GM12878 (cell line): ENCODE measurements at regions of chr22 and their contacts with region 1.

Region 1: GRCh38 chr22:46013460-46014416 is 36.8 kb upstream of the WNT7B start:
- DNase-seq: no peak
- ATAC-seq: peak; percentile 98
- H3K4me3 ChIP-seq: peak overlapping the region; percentile 84
- H3K27ac ChIP-seq: peak overlapping the region; percentile 62; the same call in 1 of the 2 replicates
- H3K4me1 ChIP-seq: peaks cover 4% of the 10 kb centered on the region; the same call in 1 of the 2 replicates
- H3K27me3 ChIP-seq: no peaks in the 10 kb centered on the region; a peak in 1 of 4 replicates
- CTCF ChIP-seq: peak; percentile 65 to 83 (median 70)
- EP300 ChIP-seq: no peak
- POLR2A ChIP-seq: peak; percentile 75
- RAD21 ChIP-seq: peak; percentile 63

Region 2: DNA sequence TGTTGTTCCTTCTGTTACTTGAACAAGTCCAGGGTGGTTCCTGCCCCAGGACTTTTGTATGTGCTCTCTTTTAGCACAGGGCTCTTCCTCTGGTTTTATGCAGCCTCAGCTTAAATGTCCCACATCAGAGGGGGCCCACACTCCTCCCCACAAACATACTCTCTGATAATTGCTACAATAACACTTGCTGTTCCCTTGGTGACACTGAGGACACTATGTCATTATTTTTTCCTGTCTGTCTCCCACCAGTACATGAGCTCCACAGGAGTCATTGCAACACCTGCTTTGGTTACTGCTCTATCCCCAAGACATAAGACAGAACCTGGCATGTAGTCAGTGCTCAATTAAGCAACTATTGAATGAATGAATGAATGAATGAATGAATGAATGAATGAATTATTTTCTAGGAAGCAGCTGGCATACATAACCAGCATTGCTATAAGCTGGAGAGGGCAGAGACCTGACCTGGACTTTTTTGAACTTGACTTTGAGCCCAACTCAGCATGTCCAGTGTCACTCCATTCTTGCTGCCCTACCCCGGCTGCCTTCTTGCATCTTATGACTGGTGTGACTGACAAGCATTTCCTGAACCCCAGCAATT is 29.3 kb before region 1 on chr22:
- CTCF ChIA-PET with region 1: no interaction called
- POLR2A ChIA-PET with region 1: no interaction called
- RAD21 ChIA-PET with region 1: no interaction called
- SMC1A ChIA-PET with region 1: no interaction called
- in situ Hi-C with region 1: no loop called
- intact Hi-C with region 1: no loop called
- DNase-seq: no peak
- ATAC-seq: no peak
- H3K4me3 ChIP-seq: no peak overlapping the region
- H3K27ac ChIP-seq: no peak overlapping the region
- H3K4me1 ChIP-seq: peaks cover under 1% of the 10 kb centered on the region
- H3K27me3 ChIP-seq: no peaks in the 10 kb centered on the region
- CTCF ChIP-seq: no peak
- EP300 ChIP-seq: no peak
- POLR2A ChIP-seq: no peak
- RAD21 ChIP-seq: no peak

Region 3: GRCh38 chr22:46035742-46036557 is 22.2 kb after region 1 on chr22:
- CTCF ChIA-PET with region 1: interaction called, 4 read pairs
- POLR2A ChIA-PET with region 1: interaction called, 3 read pairs
- RAD21 ChIA-PET with region 1: interaction called, 10 read pairs
- SMC1A ChIA-PET with region 1: interaction called, 4 read pairs
- in situ Hi-C with region 1: no loop called
- intact Hi-C with region 1: no loop called
- DNase-seq: peak; percentile 85
- ATAC-seq: peak; percentile 97
- H3K4me3 ChIP-seq: peak overlapping the region; percentile 91
- H3K27ac ChIP-seq: peak overlapping the region; percentile 88
- H3K4me1 ChIP-seq: peaks cover 9% of the 10 kb centered on the region
- H3K27me3 ChIP-seq: no peaks in the 10 kb centered on the region; a peak in 1 of 4 replicates
- CTCF ChIP-seq: no peak
- EP300 ChIP-seq: no peak; a peak in 1 of 4 replicates
- POLR2A ChIP-seq: peak; percentile 96
- RAD21 ChIP-seq: no peak

Region 4: GRCh38 chr22:46116491-46116958 is 102.8 kb after region 1 on chr22:
- CTCF ChIA-PET with region 1: interaction called, 109 read pairs
- POLR2A ChIA-PET with region 1: no interaction called
- RAD21 ChIA-PET with region 1: interaction called, 88 read pairs
- SMC1A ChIA-PET with region 1: interaction called, 3 read pairs
- in situ Hi-C with region 1: loop called (anchors 5 kb)
- intact Hi-C with region 1: no loop called
- DNase-seq: peak; percentile 16
- ATAC-seq: peak; percentile 97
- H3K4me3 ChIP-seq: no peak overlapping the region
- H3K27ac ChIP-seq: no peak overlapping the region
- H3K4me1 ChIP-seq: no peaks in the 10 kb centered on the region
- H3K27me3 ChIP-seq: no peaks in the 10 kb centered on the region; a peak in 1 of 4 replicates
- CTCF ChIP-seq: peak; percentile 90 to 98 (median 94)
- EP300 ChIP-seq: no peak
- POLR2A ChIP-seq: no peak
- RAD21 ChIP-seq: peak; percentile 98

Region 5: GRCh38 chr22:46309526-46310085 is 295.9 kb after region 1 on chr22:
- CTCF ChIA-PET with region 1: interaction called, 4 read pairs
- POLR2A ChIA-PET with region 1: no interaction called
- RAD21 ChIA-PET with region 1: no interaction called
- SMC1A ChIA-PET with region 1: no interaction called
- in situ Hi-C with region 1: loop called (anchors 5 kb)
- intact Hi-C with region 1: no loop called
- DNase-seq: no peak
- ATAC-seq: no peak
- H3K4me3 ChIP-seq: no peak overlapping the region
- H3K27ac ChIP-seq: no peak overlapping the region
- H3K4me1 ChIP-seq: no peaks in the 10 kb centered on the region
- H3K27me3 ChIP-seq: no peaks in the 10 kb centered on the region
- CTCF ChIP-seq: no peak
- EP300 ChIP-seq: no peak
- POLR2A ChIP-seq: no peak
- RAD21 ChIP-seq: no peak

Region 6: DNA sequence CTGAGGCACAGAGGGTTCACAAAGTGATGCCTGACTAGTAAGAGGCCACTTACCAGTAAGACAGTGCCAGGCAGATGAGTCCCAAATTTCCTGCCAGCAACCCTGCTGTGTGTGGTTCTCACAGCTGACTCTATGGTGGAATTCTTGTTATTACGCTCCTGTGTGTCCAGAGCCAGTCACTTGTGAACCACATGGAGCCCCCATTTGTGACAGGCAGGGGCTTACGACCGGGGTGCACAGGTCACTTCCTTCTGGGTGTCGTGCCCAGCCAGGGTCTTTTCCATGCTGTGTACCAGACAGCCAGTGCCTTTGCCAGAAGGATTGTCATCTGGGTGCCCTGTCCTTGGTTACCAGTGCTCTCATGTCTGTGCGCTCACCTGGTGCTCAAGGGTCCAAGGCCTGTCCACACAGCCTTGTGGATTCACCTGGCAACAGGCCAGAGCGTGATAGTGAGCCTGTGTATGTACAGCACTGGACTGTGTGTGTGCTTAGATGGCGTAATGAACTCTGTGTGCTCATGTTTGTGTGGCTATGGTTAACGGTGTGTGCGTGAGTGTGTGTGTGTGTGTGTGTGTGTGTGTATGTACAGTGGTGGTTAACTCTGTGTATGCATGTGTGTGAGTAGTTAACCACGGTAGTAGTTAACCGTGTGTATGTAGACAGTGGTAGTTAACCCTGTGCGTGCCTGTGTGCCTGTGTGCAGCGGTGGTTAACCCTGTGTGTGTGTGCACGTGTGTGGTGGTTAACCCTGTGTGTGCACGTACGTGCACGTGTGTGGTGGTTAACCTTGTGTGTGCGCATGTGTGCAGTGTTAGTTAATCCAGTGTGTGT is 625.1 kb after region 1 on chr22:
- CTCF ChIA-PET with region 1: no interaction called
- POLR2A ChIA-PET with region 1: no interaction called
- RAD21 ChIA-PET with region 1: no interaction called
- SMC1A ChIA-PET with region 1: no interaction called
- in situ Hi-C with region 1: no loop called
- intact Hi-C with region 1: no loop called
- DNase-seq: no peak
- ATAC-seq: no peak
- H3K4me3 ChIP-seq: no peak overlapping the region
- H3K27ac ChIP-seq: no peak overlapping the region
- H3K4me1 ChIP-seq: no peaks in the 10 kb centered on the region
- H3K27me3 ChIP-seq: no peaks in the 10 kb centered on the region
- CTCF ChIP-seq: no peak
- EP300 ChIP-seq: no peak
- POLR2A ChIP-seq: no peak
- RAD21 ChIP-seq: no peak